AG04450 (cell line): ENCODE measurements at regions of chr12 and their contacts with region 1.

Region 1: GRCh38 chr12:53701518-53702260 is 25.6 kb downstream of the CALCOCO1 start:
- DNase-seq: peak; percentile 30
- H3K4me3 ChIP-seq: no peak overlapping the region
- H3K27ac ChIP-seq: no peak overlapping the region
- H3K27me3 ChIP-seq: peaks cover 52% of the 10 kb centered on the region
- CTCF ChIP-seq: peak; percentile 95

Region 2: DNA sequence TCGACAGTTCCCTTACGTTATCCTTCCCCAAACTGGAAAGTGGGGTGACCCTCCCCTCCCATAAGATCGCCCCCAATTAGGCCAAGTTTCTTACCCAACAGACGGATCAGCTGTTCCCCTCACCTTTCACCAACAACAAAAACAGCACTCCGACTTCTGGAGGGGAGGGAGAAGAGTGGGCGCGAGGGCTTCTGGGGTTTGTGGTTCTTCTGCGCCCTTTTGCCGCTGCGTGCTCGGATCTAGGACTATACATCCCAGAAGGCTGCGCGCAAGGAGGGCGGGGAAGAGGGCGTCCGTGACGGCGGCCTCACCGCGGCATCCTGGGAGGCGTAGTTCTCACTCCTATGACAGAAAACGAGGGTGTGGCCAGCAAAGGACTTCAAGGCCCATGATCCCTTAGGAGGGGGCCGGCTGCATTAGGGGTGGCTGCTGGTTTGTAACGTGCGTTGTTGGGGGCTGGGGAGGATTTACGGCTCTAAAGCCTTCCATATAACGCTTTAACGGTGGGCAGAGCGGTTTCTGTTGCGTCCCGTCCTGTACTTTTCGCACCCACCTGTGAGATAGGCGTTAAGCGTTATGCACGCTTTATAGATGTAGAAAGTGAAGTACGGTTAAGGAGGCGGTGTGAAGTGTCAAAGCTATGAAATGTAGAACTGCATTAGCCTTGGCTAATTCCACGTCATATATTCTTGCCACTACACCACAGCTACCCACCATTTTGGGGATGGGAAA is 25.8 kb after region 1 on chr12 and contains the start of gene CALCOCO1:
- CTCF ChIA-PET with region 1: interaction called, 18 read pairs
- POLR2A ChIA-PET with region 1: no interaction called
- DNase-seq: peak; percentile 93
- H3K4me3 ChIP-seq: peak within 1 kb of the TSS; percentile 98
- H3K27ac ChIP-seq: peak within 1 kb of the TSS; percentile 11
- H3K27me3 ChIP-seq: no peaks in the 10 kb centered on the region
- CTCF ChIP-seq: no peak
- polyA plus RNA-seq, gene CALCOCO1: 124 and 128 TPM in 2 replicates

Region 3: DNA sequence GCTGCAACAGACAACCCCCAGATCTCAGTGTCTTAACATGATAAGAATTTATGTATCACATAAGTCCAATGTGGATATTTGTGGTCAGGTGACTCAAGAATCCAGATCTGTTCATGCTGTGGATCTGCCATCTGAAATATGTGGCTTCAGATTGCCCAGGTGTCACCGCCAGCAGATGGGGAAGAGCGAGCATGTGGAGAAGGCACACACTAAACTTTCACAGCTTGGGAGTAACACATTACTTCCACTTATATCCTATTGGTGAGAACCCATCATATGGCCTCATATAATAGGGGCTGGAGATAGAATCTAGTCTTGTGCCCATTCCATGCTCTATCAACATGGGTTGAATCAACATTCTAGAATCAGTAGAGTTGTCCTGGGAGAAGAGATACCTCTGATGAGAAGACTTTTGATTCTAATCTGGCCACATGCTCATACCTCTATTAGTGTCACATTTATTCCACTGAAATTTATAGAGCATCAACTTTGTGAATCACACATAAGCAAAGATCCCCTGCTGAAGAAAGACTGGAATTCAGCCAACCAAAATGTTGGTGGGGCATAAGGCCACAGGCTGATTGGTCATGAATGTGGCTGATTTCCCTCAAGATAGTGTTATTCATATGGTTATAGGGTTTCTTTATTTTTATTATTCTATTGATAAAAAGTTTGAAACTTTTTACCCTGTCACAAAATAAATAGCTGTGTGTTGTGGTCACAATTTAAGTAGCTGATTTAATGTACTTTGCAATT is 31.5 kb after region 1 on chr12:
- CTCF ChIA-PET with region 1: interaction called, 18 read pairs
- POLR2A ChIA-PET with region 1: no interaction called
- DNase-seq: no peak
- H3K4me3 ChIP-seq: no peak overlapping the region
- H3K27ac ChIP-seq: no peak overlapping the region
- H3K27me3 ChIP-seq: peaks cover 34% of the 10 kb centered on the region
- CTCF ChIP-seq: no peak

Region 4: DNA sequence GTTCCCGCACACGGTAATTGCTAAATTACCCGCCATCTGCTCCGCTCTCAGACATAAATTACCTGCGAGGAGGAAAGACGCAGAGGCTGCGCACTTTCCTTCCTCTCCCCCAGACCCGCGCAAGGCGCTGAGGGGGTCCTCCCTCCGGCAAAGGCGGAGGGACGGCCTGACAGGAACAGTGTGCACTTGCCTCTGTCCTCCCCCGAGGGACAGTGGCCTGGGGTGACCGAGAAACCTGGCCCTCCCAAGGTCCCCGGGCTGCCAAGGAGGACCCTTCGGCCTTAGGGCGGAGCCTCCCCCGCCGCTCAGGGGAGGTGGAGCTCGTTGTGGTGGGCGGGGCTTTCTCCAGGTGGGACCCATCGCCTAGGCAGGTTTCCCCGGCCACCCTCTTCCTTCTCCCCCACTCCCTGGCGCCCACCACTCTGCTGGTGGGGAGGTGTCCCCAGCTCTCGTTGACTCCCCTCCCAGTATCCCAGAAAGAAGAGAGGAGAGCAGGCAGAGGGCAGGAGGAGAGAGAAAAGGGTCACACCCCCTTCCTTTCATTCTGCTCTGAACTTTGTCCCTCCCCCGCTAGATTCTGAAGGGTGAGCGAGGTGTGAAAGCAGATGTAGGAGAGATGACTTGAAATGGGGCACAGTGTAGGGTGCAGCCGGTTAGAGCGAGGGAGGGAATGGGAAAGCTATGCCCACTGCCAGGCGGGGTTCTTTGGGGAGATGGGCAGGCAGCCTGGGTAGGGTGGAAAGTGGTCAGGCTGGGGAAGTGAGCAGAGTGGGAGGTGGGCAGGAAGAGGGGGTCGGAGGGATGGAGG is 36.9 kb after region 1 on chr12:
- CTCF ChIA-PET with region 1: interaction called, 518 read pairs
- POLR2A ChIA-PET with region 1: interaction called, 6 read pairs
- DNase-seq: no peak
- H3K4me3 ChIP-seq: no peak overlapping the region
- H3K27ac ChIP-seq: no peak overlapping the region
- H3K27me3 ChIP-seq: peaks cover 74% of the 10 kb centered on the region
- CTCF ChIP-seq: no peak

Region 5: GRCh38 chr12:53757095-53757770 is 55.5 kb after region 1 on chr12:
- CTCF ChIA-PET with region 1: interaction called, 10 read pairs
- POLR2A ChIA-PET with region 1: no interaction called
- DNase-seq: no peak
- H3K4me3 ChIP-seq: no peak overlapping the region
- H3K27ac ChIP-seq: no peak overlapping the region
- H3K27me3 ChIP-seq: peaks cover 46% of the 10 kb centered on the region
- CTCF ChIP-seq: peak; percentile 92

Region 6: DNA sequence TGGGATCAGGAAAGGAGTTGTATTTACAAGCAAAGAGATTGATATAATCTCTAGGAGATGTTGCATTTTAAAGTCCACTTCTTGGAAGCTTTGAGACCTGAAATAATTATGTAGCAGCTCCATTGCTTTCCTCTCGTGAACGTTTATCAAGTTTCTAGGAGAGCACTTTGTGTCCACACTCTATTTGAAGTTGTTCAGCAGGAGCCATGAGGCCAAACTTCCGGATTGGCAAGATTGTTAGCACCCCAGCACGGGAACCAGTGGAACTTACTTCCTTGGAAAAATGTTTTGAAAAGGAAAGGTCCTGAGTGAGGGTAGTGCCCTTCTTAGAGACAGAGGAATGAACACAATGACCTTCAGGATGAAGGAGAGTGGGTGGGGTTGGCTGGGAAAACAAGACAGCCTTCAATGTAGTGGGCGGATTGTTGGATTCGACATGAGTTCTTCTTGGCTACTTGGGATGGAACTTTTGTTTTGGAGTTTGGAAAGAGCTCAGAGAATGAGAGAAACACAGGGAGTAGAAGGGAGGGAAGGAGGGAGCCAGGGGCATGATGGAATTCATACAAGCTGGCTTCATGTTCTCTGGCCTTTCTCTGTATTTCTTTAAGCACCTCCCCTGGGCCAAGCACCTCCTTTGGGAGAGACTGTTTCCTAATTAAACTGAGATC is 73.9 kb after region 1 on chr12:
- CTCF ChIA-PET with region 1: no interaction called
- POLR2A ChIA-PET with region 1: no interaction called
- DNase-seq: no peak
- H3K4me3 ChIP-seq: no peak overlapping the region
- H3K27ac ChIP-seq: no peak overlapping the region
- H3K27me3 ChIP-seq: no peaks in the 10 kb centered on the region
- CTCF ChIP-seq: no peak